A673 (cell line): ENCODE measurements at regions of chr12 and their contacts with region 1.

Region 1: DNA sequence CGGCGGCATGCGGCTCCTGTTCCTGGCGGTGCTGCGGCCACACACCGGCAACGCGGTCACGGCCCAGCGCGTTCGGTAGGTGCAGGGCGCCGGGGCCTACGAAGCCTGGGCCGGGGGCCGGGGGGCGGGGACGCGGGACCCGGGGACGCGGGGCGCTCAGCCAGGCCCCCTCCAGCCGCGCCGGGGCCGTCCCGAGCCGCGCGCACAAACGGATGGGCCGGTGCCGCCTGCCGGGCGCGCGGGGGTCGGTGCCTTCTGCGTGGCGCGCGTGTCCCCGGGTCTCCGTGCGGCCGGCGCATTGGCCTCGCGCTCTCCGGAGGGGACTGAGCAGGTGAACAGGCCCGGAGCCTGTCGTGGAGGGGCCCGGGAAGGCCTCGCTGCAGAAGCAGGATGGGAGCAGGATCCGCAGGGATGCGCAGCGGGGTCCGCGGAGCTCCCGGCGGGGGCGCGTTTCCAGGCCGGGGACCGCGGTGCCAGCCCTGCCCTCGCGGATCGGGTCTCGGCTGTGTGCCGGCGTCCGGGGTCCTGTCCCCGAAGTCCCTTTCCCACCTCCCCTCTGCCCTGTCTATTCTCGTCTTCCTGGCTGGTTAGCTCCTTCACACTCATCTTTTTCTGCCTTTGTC is 408 bp downstream of the GLT1D1 start:
- DNase-seq: no peak
- H3K4me3 ChIP-seq: no peak overlapping the region
- H3K27ac ChIP-seq: no peak overlapping the region
- H3K4me1 ChIP-seq: no peaks in the 10 kb centered on the region
- H3K27me3 ChIP-seq: no peaks in the 10 kb centered on the region
- CTCF ChIP-seq: no peak

Region 2: GRCh38 chr12:128702374-128702773 is 151.3 kb before region 1 on chr12:
- CTCF ChIA-PET with region 1: no interaction called
- POLR2A ChIA-PET with region 1: no interaction called
- intact Hi-C with region 1: no loop called
- DNase-seq: no peak
- H3K4me3 ChIP-seq: no peak overlapping the region
- H3K27ac ChIP-seq: no peak overlapping the region
- H3K4me1 ChIP-seq: no peaks in the 10 kb centered on the region
- H3K27me3 ChIP-seq: peaks cover 29% of the 10 kb centered on the region
- CTCF ChIP-seq: no peak

Region 3: DNA sequence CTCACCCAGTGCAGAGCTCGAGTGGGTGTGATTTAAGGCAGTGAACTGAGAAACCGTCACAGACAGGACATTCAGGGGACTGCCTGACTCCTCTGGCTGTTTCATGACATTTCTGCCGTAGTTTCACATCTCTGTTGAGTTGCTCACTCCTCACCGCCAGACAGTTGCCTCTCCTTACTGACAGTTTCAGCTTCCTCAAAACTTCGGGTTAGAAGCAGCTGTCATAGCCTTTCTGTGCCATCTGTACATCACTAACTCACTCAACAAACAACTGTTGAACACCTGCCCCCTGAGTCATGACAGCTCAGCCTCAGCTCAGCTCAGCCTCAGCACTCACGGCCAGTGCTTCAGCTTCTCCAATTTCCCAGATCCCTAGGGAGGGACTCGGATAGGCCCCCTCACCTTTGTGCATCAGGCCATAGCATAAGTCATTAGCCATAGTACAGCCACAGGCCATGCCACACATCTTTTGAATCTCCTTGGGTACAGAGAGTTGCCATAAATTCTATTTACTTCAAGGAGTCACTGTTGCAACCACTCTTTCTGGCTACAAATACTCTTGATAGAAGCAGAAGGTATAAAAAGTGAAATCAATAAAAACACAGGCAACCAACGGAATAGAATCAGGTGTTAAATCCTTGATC is 23.7 kb before region 1 on chr12:
- CTCF ChIA-PET with region 1: no interaction called
- POLR2A ChIA-PET with region 1: interaction called, 13 read pairs
- intact Hi-C with region 1: no loop called
- DNase-seq: no peak
- H3K4me3 ChIP-seq: no peak overlapping the region
- H3K27ac ChIP-seq: no peak overlapping the region
- H3K4me1 ChIP-seq: no peaks in the 10 kb centered on the region
- H3K27me3 ChIP-seq: no peaks in the 10 kb centered on the region
- CTCF ChIP-seq: no peak